HCT116 (cell line): ENCODE measurements at regions of chr10 and their contacts with region 1.

Region 1: GRCh38 chr10:109883859-109884771 is 39.2 kb downstream of the XPNPEP1 start:
- DNase-seq: peak; percentile 88
- ATAC-seq: peak; percentile 94
- H3K4me3 ChIP-seq: no peak overlapping the region
- H3K27ac ChIP-seq: peak overlapping the region; percentile 50
- H3K4me1 ChIP-seq: peaks cover 7 to 8% of the 10 kb centered on the region in 2 experiments
- H3K27me3 ChIP-seq: no peaks in the 10 kb centered on the region
- CTCF ChIP-seq: peak; percentile 98 to 100 (median 99)
- POLR2A ChIP-seq: no peak
- RAD21 ChIP-seq: peak; percentile 97

Region 2: GRCh38 chr10:109624939-109625338 is 259.2 kb before region 1 on chr10:
- CTCF ChIA-PET with region 1: no interaction called
- POLR2A ChIA-PET with region 1: no interaction called
- RAD21 ChIA-PET with region 1: no interaction called
- intact Hi-C with region 1: no loop called
- DNase-seq: no peak
- ATAC-seq: no peak
- H3K4me3 ChIP-seq: no peak overlapping the region
- H3K27ac ChIP-seq: no peak overlapping the region
- H3K4me1 ChIP-seq: no peaks in the 10 kb centered on the region
- H3K27me3 ChIP-seq: no peaks in the 10 kb centered on the region
- CTCF ChIP-seq: no peak
- POLR2A ChIP-seq: no peak
- RAD21 ChIP-seq: no peak

Region 3: DNA sequence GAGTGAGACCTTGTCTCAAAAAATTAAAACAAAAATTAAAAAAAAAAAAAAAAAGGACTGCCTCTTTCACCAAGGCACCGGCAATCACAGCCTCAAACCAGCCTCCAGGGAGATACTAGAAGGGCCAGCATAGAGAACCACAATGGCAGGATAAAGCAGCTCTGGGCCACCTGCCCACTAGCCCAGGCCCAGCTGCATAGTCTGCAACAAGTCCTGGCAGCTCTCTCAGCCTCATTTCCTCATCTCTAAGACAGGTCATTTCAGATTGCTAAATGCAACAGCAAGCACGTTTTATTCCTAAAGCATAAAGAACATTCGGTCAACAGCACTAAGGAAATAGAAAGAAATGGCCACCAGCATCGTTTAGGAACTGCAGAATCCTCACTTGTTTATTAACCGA is 10.4 kb after region 1 on chr10:
- CTCF ChIA-PET with region 1: interaction called, 28 read pairs
- POLR2A ChIA-PET with region 1: no interaction called
- RAD21 ChIA-PET with region 1: no interaction called
- intact Hi-C with region 1: no loop called
- DNase-seq: no peak
- ATAC-seq: no peak
- H3K4me3 ChIP-seq: no peak overlapping the region
- H3K27ac ChIP-seq: no peak overlapping the region
- H3K4me1 ChIP-seq: peaks cover 0 to 1% of the 10 kb centered on the region in 2 experiments; a peak in 1 of 4 replicates
- H3K27me3 ChIP-seq: no peaks in the 10 kb centered on the region
- CTCF ChIP-seq: no peak
- POLR2A ChIP-seq: no peak
- RAD21 ChIP-seq: no peak

Region 4: GRCh38 chr10:110007701-110008517 is 123.8 kb after region 1 on chr10 and contains the start of gene ADD3:
- CTCF ChIA-PET with region 1: interaction called, 8 read pairs
- POLR2A ChIA-PET with region 1: no interaction called
- RAD21 ChIA-PET with region 1: interaction called in 1 of 2 experiments, 4 read pairs
- intact Hi-C with region 1: loop called (anchors 2 kb)
- DNase-seq: peak; percentile 78
- ATAC-seq: peak; percentile 78
- H3K4me3 ChIP-seq: peak within 1 kb of the TSS; percentile 68 to 81
- H3K27ac ChIP-seq: peak within 1 kb of the TSS; percentile 63
- H3K4me1 ChIP-seq: peaks cover 21 to 49% of the 10 kb centered on the region in 2 experiments
- H3K27me3 ChIP-seq: no peaks in the 10 kb centered on the region
- CTCF ChIP-seq: no peak
- POLR2A ChIP-seq: peak; percentile 69
- RAD21 ChIP-seq: no peak
- total RNA-seq, gene ADD3: 41.1 TPM

Region 5: GRCh38 chr10:110035070-110035921 is 151.2 kb after region 1 on chr10:
- CTCF ChIA-PET with region 1: interaction called, 11 read pairs
- POLR2A ChIA-PET with region 1: no interaction called
- RAD21 ChIA-PET with region 1: no interaction called
- intact Hi-C with region 1: no loop called
- DNase-seq: no peak
- ATAC-seq: peak; percentile 54
- H3K4me3 ChIP-seq: no peak overlapping the region
- H3K27ac ChIP-seq: no peak overlapping the region
- H3K4me1 ChIP-seq: no peaks in the 10 kb centered on the region
- H3K27me3 ChIP-seq: no peaks in the 10 kb centered on the region
- CTCF ChIP-seq: peak; percentile 17 to 48 (median 26); a peak in 4 of 6 replicates
- POLR2A ChIP-seq: no peak
- RAD21 ChIP-seq: peak; percentile 30; the same call in 1 of the 2 replicates

Region 6: DNA sequence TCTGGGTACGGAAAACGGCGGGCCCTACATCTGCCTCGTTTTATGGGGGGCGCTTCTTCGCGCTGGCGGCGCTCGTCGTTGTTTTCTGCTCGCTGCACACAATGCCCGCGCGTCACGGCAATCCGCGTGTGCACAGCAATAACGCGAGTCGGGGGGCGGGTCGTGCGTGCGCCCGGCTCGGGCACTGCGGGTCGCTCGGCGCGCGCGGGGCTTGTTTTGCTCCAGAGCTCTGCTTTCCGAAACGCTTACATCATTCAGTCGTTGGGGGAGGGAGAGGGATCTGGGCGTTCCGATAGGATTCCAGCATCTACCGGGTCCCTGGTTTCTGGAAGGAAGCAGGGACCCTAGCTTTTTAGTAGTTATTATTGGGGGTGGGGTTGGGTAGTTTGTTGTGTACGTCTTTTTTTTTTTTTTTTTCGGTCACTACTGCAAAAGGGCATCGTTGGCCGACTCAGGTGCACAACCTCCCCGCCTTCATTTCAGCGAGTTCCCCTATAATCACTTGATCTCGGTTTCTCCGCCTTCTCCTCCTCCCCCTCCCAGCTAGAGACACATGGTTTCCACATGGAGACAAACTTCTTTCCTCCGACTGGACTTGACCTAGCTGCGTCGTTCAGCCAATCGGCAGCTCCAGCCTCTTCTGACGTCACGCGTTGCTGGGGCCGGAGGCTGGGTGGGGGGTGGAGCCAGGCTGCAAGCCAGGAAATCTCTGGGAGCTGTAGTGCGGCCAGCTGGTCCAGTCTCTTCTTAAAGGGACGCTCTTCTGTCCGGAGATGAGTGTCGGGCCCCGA is 326.8 kb after region 1 on chr10:
- CTCF ChIA-PET with region 1: interaction called, 11 read pairs
- POLR2A ChIA-PET with region 1: no interaction called
- RAD21 ChIA-PET with region 1: no interaction called
- intact Hi-C with region 1: no loop called
- DNase-seq: peak; percentile 99
- ATAC-seq: peak; percentile 73
- H3K4me3 ChIP-seq: peak overlapping the region; percentile 67 to 76
- H3K27ac ChIP-seq: peak overlapping the region; percentile 46; the same call in 1 of the 2 replicates
- H3K4me1 ChIP-seq: peaks cover 14 to 51% of the 10 kb centered on the region in 2 experiments
- H3K27me3 ChIP-seq: no peaks in the 10 kb centered on the region
- CTCF ChIP-seq: no peak
- POLR2A ChIP-seq: peak; percentile 33
- RAD21 ChIP-seq: no peak

Region 7: GRCh38 chr10:110279407-110279986 is 395.4 kb after region 1 on chr10:
- CTCF ChIA-PET with region 1: interaction called, 25 read pairs
- POLR2A ChIA-PET with region 1: no interaction called
- RAD21 ChIA-PET with region 1: no interaction called
- intact Hi-C with region 1: loop called (anchors 1 kb)
- DNase-seq: peak; percentile 54
- ATAC-seq: peak; percentile 86
- H3K4me3 ChIP-seq: no peak overlapping the region
- H3K27ac ChIP-seq: no peak overlapping the region
- H3K4me1 ChIP-seq: peaks cover 0 to 3% of the 10 kb centered on the region in 2 experiments; a peak in 1 of 4 replicates
- H3K27me3 ChIP-seq: no peaks in the 10 kb centered on the region
- CTCF ChIP-seq: peak; percentile 79 to 94 (median 91)
- POLR2A ChIP-seq: no peak
- RAD21 ChIP-seq: peak; percentile 95

Region 8: GRCh38 chr10:110354322-110354766 is 470.2 kb after region 1 on chr10:
- CTCF ChIA-PET with region 1: no interaction called
- POLR2A ChIA-PET with region 1: no interaction called
- RAD21 ChIA-PET with region 1: no interaction called
- intact Hi-C with region 1: no loop called
- DNase-seq: peak; percentile 85
- ATAC-seq: peak; percentile 76
- H3K4me3 ChIP-seq: peak overlapping the region; percentile 27 to 36
- H3K27ac ChIP-seq: 0 out of 2 replicates have a peak overlapping the region, but pooled peaks have one; percentile 6
- H3K4me1 ChIP-seq: peaks cover 58 to 68% of the 10 kb centered on the region in 2 experiments
- H3K27me3 ChIP-seq: no peaks in the 10 kb centered on the region
- CTCF ChIP-seq: peak in 2 of 3 experiments; percentile 97; a peak in 4 of 6 replicates
- POLR2A ChIP-seq: no peak
- RAD21 ChIP-seq: no peak

Region 9: GRCh38 chr10:110414563-110415309 is 530.6 kb after region 1 on chr10:
- CTCF ChIA-PET with region 1: no interaction called
- POLR2A ChIA-PET with region 1: no interaction called
- RAD21 ChIA-PET with region 1: no interaction called
- intact Hi-C with region 1: no loop called
- DNase-seq: peak; percentile 98
- ATAC-seq: peak; percentile 70
- H3K4me3 ChIP-seq: peak overlapping the region in 1 of 2 experiments; percentile 32; a peak in 2 of 4 replicates
- H3K27ac ChIP-seq: peak overlapping the region; percentile 95
- H3K4me1 ChIP-seq: peaks cover 84 to 92% of the 10 kb centered on the region in 2 experiments
- H3K27me3 ChIP-seq: no peaks in the 10 kb centered on the region
- CTCF ChIP-seq: no peak
- POLR2A ChIP-seq: peak; percentile 18
- RAD21 ChIP-seq: no peak